Natural killer cell (primary cell): ENCODE measurements at regions of chr13 and their contacts with region 1.

Region 1: GRCh38 chr13:31161828-31162590 is at the start of gene HSPH1:
- DNase-seq: peak; percentile 96 to 99
- ATAC-seq: peak; percentile 86 to 96 (median 88)
- H3K4me3 ChIP-seq: peak within 1 kb of the TSS; percentile 81
- H3K4me3 Mint-ChIP-seq: peak within 1 kb of the TSS; percentile 99
- H3K27ac ChIP-seq: peak within 1 kb of the TSS; percentile 88
- H3K27ac Mint-ChIP-seq: peak within 1 kb of the TSS; percentile 95 to 99
- H3K4me1 ChIP-seq: peaks cover 8% of the 10 kb centered on the region
- H3K4me1 Mint-ChIP-seq: peaks cover 42 to 47% of the 10 kb centered on the region in 2 donors
- H3K27me3 ChIP-seq: no peaks in the 10 kb centered on the region
- H3K27me3 Mint-ChIP-seq: no peaks in the 10 kb centered on the region
- CTCF ChIP-seq: no peak
- total RNA-seq, gene HSPH1: 51.2 to 81.6 (median 75.4) TPM

Region 2: DNA sequence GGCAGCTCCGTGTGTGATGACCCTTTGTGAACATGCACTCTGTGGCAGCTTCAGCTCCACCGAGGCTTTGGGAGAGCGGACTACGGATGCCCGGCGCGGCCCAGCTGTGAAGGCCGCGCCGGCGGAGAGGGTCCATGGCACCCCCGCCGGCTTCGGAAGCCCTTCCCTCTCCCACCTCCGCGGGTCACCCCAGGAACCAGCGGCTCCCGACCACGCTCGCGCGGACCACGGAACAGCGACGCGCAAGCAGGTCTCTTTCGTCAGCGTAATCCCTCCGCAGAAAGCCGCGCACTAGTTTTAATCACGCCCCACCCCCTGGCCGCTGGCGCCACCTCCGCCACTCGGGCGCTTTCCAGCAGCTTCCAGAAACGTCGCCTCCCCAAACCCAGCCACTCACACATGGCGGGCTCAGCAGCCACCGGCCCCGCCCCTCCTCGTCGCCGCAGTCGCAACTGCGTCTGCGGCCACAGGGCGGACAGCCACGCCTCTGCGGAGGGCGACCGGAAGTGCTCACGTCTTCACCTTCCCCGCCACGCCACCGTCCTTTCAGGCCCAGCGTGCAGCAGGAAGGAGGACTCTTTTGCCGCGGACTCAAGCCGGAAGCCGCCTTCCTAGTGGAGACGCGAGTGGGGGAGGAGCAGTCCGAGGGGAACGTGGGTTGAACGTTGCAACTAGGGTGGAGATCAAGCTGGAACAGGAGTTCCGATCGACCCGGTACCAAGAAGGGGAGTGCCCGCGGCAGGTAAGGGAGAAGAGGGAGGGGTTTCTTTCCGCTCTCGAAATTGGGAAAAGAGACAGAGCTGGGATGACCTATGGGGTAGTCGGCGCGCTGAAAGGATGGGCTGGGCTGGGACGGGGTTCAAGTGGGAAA is 544.5 kb before region 1 on chr13 and contains the start of gene USPL1:
- intact Hi-C with region 1: loop called (anchors 5 kb)
- DNase-seq: peak; percentile 98 to 100
- ATAC-seq: peak; percentile 84 to 96 (median 88)
- H3K4me3 ChIP-seq: peak within 1 kb of the TSS; percentile 100
- H3K4me3 Mint-ChIP-seq: no peak within 1 kb of the TSS
- H3K27ac ChIP-seq: peak within 1 kb of the TSS; percentile 98
- H3K27ac Mint-ChIP-seq: no peak within 1 kb of the TSS
- H3K4me1 ChIP-seq: peaks cover 7% of the 10 kb centered on the region
- H3K4me1 Mint-ChIP-seq: peaks cover 0 to 5% of the 10 kb centered on the region in 2 donors
- H3K27me3 ChIP-seq: no peaks in the 10 kb centered on the region
- H3K27me3 Mint-ChIP-seq: no peaks in the 10 kb centered on the region
- CTCF ChIP-seq: no peak
- total RNA-seq, gene USPL1: 34.8 to 39.0 (median 36.9) TPM

Region 3: DNA sequence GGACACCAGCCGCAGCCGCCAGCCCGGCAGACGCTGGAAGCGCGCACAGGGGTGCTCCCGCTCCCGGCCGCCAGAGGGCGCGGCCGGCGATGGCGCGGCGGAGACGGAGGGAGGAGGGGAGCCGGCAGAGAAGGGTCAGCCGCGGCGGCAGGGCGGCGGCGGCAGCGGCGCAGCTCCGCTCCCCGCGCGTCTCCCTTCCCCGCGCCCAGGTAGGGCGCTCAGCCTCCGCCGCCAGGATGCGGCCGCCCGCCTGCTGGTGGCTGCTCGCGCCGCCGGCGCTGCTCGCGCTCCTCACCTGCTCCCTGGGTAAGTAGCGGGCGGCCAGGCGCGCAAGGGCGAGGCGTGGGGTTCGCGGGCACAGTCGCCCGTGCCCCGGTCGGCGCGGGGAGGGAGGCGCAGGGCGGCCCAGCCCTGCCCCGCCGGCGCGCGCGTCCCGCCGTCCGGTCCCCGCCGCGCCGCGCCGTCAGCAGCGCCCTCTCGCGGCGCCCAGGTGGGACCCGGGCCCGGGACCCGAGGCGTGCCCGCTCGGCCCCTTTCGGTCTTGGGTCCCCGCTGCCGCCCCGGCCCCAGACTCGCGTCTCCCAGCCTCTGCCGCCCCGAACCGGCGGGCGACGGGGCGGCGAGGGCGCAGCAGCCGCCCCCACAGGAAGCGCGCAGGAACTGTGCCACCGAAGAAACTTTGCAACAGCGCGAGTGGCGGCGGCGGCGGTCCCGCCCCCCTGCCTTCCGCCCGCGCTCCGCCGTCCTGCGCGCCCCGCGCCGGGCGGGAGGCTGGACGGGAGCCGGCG is 38.0 kb after region 1 on chr13 and contains the start of gene B3GLCT:
- intact Hi-C with region 1: loop called (anchors 1 kb)
- DNase-seq: peak; percentile 83 to 92
- ATAC-seq: peak; percentile 77 to 92 (median 81)
- H3K4me3 ChIP-seq: peak within 1 kb of the TSS; percentile 63
- H3K4me3 Mint-ChIP-seq: peak within 1 kb of the TSS; percentile 87
- H3K27ac ChIP-seq: peak within 1 kb of the TSS; percentile 88
- H3K27ac Mint-ChIP-seq: peak within 1 kb of the TSS; percentile 84 to 92
- H3K4me1 ChIP-seq: peaks cover 14% of the 10 kb centered on the region
- H3K4me1 Mint-ChIP-seq: peaks cover 22 to 27% of the 10 kb centered on the region in 2 donors
- H3K27me3 ChIP-seq: no peaks in the 10 kb centered on the region
- H3K27me3 Mint-ChIP-seq: no peaks in the 10 kb centered on the region
- CTCF ChIP-seq: peak; percentile 81
- total RNA-seq, gene B3GLCT: 6.0 to 8.1 (median 6.2) TPM

Region 4: DNA sequence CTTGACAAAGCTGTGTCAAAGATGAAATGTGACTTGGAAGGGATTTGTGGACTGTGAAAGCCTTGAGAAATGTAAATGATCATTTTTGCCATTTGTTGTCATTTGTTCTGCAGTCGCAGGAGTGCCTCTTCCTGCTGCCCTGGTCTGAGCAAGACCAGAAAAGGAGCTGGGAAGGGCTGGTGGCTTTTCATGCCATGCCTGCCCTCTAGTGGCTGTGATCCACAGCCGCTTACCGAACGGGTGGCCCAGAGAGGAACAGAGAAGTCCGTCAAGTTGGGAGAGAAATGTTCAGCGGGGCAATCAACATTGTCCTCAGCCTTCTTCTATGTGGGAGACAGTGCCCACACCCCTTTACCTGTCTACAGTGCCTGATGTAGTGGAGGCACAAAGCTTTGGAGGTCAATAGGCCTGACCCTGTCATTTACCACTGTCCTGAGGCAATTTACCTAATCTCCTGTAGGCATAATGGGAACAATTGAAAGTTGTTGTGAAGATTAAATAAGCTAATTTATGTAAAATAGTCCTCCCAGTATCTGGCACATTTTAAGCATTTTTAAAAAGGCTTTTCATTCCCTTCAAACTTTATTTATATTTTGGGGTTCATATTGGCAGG is 262.2 kb after region 1 on chr13:
- intact Hi-C with region 1: loop called (anchors 5 kb)
- DNase-seq: peak; percentile 34 to 63
- ATAC-seq: peak; percentile 76 to 94 (median 82)
- H3K4me3 ChIP-seq: no peak overlapping the region
- H3K4me3 Mint-ChIP-seq: no peak overlapping the region
- H3K27ac ChIP-seq: no peak overlapping the region
- H3K27ac Mint-ChIP-seq: no peak overlapping the region
- H3K4me1 ChIP-seq: no peaks in the 10 kb centered on the region
- H3K4me1 Mint-ChIP-seq: no peaks in the 10 kb centered on the region
- H3K27me3 ChIP-seq: no peaks in the 10 kb centered on the region
- H3K27me3 Mint-ChIP-seq: peaks cover 12 to 22% of the 10 kb centered on the region in 2 donors
- CTCF ChIP-seq: peak; percentile 70

Region 5: GRCh38 chr13:31742097-31742734 is 580.2 kb after region 1 on chr13:
- intact Hi-C with region 1: loop called (anchors 5 kb)
- DNase-seq: peak; percentile 51 to 78
- ATAC-seq: peak; percentile 95 to 98 (median 95)
- H3K4me3 ChIP-seq: no peak overlapping the region
- H3K4me3 Mint-ChIP-seq: no peak overlapping the region
- H3K27ac ChIP-seq: no peak overlapping the region
- H3K27ac Mint-ChIP-seq: no peak overlapping the region
- H3K4me1 ChIP-seq: no peaks in the 10 kb centered on the region
- H3K4me1 Mint-ChIP-seq: peaks cover 4 to 5% of the 10 kb centered on the region in 2 donors
- H3K27me3 ChIP-seq: peaks cover 2% of the 10 kb centered on the region
- H3K27me3 Mint-ChIP-seq: peaks cover 14 to 18% of the 10 kb centered on the region in 2 donors
- CTCF ChIP-seq: peak; percentile 99

Region 6: DNA sequence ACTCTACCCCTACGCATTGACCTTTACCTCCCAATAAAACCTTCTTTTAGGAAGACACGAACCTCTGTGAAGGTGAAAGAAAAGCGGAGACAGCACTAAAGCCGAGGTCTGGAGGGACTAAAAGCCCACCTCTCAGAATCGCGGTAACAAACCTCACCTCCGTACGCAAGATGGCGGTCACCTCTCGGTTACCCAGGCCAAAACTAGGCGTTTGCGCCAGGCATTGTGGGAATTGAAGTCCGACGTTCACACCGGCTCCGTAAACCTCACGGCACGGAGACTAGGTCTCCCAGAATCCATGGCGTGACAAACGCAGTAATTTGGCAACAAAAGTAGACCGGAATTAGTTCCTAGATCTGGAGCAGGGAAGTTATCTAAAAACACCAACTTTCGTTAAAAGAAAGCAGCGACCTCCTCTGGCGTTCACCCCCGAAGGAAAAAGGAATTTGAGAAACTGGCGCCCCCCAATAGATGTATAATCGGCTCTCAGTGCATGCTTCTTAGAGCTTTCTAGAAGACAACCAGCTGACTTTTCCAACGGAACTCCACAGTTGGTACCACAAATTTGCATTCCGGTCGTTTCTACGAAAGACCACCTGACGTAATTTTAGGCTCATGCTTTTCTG is 1376.7 kb after region 1 on chr13 and contains the start of gene N4BP2L2:
- intact Hi-C with region 1: loop called (anchors 5 kb)
- DNase-seq: peak; percentile 85 to 97
- ATAC-seq: peak; percentile 94 to 98 (median 96)
- H3K4me3 ChIP-seq: peak within 1 kb of the TSS; percentile 96
- H3K4me3 Mint-ChIP-seq: peak within 1 kb of the TSS; percentile 99
- H3K27ac ChIP-seq: peak within 1 kb of the TSS; percentile 99
- H3K27ac Mint-ChIP-seq: peak within 1 kb of the TSS; percentile 98 to 99
- H3K4me1 ChIP-seq: peaks cover 15% of the 10 kb centered on the region
- H3K4me1 Mint-ChIP-seq: peaks cover 48 to 50% of the 10 kb centered on the region in 2 donors
- H3K27me3 ChIP-seq: no peaks in the 10 kb centered on the region
- H3K27me3 Mint-ChIP-seq: peaks cover 0 to 4% of the 10 kb centered on the region in 2 donors
- CTCF ChIP-seq: no peak
- total RNA-seq, gene N4BP2L2: 195 to 247 (median 221) TPM